Mucosa of descending colon (tissue), 3 donors: ENCODE measurements at regions of chr7 and their contacts with region 1.

Region 1: DNA sequence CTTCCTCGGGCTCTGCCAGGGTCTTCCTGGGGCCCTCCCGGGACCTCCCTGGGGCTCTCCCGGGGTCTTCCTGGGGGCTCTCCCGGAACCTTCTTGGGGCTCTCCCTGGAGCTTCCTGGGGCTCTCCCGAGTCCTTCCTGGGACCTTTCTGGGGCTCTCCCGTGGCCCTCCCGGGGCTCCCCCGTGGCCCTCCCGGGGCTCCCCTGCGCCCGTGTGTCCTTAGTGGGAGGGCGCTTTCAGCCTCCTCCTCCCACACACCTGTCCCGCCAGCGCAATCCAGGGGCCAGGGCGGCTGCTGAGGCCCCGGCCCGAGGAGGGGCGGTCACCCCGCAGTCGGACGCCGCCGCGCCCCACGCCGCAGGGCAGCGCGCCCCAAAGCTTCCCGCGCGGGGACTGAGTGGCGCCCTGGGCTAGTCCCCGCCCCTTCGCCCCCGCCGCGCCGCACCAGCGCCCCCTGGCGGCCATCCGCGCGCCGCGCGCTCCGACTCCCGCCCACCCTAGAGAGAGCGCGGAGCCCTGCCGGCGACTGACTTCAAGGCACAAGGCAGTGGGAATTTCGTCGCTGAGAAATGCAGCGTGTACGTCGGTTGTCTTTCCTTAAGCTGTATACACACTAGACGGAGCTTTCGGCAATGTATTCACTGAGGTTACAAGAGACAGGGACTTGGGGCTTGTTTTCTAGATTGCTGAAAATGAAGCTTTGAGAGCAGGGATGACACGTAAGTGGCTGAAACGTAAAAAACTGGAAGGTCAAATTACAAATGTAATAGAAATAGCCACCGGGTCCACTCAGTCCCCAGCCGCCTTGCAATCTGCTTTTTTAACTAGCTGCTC is 47.1 kb downstream of the INSIG1 start:
- DNase-seq: peak; percentile 70 to 87 (median 82)
- ATAC-seq: peak; percentile 98
- H3K4me3 ChIP-seq: no peak overlapping the region
- H3K4me1 ChIP-seq: no peaks in the 10 kb centered on the region
- CTCF ChIP-seq: peak; percentile 87

Region 2: GRCh38 chr7:154927624-154928143 is 417.1 kb before region 1 on chr7:
- intact Hi-C with region 1: loop called (anchors 10 kb)
- DNase-seq: peak in 2 of 3 donors; percentile 53 to 98
- ATAC-seq: peak; percentile 81
- H3K4me3 ChIP-seq: peak overlapping the region; percentile 22
- H3K4me1 ChIP-seq: peaks cover 10% of the 10 kb centered on the region
- CTCF ChIP-seq: peak; percentile 18

Region 3: GRCh38 chr7:155190688-155191087 is 154.1 kb before region 1 on chr7:
- intact Hi-C with region 1: loop called (anchors 2 to 5 kb)
- DNase-seq: peak in 2 of 3 donors; percentile 68 to 73
- ATAC-seq: peak; percentile 90
- H3K4me3 ChIP-seq: no peak overlapping the region
- H3K4me1 ChIP-seq: no peaks in the 10 kb centered on the region
- CTCF ChIP-seq: peak; percentile 59

Region 4: DNA sequence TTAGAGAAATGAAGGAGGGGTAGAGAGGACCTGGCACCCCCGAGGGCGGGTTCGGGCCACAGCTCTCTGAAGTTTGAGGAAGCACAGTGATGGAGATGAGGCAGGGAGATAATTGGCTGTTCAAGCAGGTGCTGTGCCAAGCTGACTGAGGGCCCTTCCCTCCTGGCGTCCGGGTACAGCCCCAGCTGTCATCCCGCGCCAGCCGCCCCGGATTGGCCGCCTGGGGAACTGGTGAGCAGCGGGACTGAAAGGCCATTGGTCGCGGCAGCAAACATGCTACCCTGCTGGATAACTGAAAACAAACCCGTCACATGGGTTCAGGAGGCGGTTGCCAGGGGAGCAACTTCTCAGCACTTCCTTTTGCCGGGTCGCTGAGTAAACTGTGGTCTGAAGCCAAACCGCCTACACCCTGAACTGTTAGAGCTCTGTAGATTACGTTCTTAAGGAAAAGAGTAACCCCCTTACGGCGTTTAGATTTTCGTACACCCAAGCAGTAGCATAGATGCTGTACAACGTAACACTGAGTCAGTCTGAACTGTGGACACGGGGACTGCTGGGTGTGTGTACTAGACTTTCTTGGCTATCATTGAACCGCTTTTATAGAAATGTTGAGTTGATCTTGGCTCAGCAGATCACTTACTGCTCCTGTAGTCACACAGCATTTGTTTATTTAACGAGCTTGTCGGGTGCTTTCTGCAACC is 45.8 kb before region 1 on chr7:
- intact Hi-C with region 1: no loop called
- DNase-seq: peak; percentile 94 to 98 (median 97)
- ATAC-seq: peak; percentile 81
- H3K4me3 ChIP-seq: peak overlapping the region; percentile 71
- H3K4me1 ChIP-seq: peaks cover 25% of the 10 kb centered on the region
- CTCF ChIP-seq: no peak

Region 5: GRCh38 chr7:155477476-155477875 is 132.7 kb after region 1 on chr7:
- intact Hi-C with region 1: no loop called
- DNase-seq: no peak
- ATAC-seq: no peak
- H3K4me3 ChIP-seq: no peak overlapping the region
- H3K4me1 ChIP-seq: no peaks in the 10 kb centered on the region
- CTCF ChIP-seq: no peak